ENCODE measurements at regions of chr17 and their contacts with region 1.

Region 1: GRCh38 chr17:17356149-17356930 is 53.2 kb downstream of the NT5M start:
- DNase-seq: peak; percentile 85
- ATAC-seq: peak; percentile 98
- H3K4me3 ChIP-seq: no peak overlapping the region
- H3K27ac ChIP-seq: no peak overlapping the region
- H3K4me1 ChIP-seq: peaks cover 2% of the 10 kb centered on the region; the same call in 1 of the 2 replicates
- H3K27me3 ChIP-seq: no peaks in the 10 kb centered on the region; the same call in 1 of the 2 replicates
- CTCF ChIP-seq: peak; percentile 99
- POLR2A ChIP-seq: peak; percentile 70; the same call in 1 of the 2 replicates
- RAD21 ChIP-seq: peak; percentile 100

Region 2: DNA sequence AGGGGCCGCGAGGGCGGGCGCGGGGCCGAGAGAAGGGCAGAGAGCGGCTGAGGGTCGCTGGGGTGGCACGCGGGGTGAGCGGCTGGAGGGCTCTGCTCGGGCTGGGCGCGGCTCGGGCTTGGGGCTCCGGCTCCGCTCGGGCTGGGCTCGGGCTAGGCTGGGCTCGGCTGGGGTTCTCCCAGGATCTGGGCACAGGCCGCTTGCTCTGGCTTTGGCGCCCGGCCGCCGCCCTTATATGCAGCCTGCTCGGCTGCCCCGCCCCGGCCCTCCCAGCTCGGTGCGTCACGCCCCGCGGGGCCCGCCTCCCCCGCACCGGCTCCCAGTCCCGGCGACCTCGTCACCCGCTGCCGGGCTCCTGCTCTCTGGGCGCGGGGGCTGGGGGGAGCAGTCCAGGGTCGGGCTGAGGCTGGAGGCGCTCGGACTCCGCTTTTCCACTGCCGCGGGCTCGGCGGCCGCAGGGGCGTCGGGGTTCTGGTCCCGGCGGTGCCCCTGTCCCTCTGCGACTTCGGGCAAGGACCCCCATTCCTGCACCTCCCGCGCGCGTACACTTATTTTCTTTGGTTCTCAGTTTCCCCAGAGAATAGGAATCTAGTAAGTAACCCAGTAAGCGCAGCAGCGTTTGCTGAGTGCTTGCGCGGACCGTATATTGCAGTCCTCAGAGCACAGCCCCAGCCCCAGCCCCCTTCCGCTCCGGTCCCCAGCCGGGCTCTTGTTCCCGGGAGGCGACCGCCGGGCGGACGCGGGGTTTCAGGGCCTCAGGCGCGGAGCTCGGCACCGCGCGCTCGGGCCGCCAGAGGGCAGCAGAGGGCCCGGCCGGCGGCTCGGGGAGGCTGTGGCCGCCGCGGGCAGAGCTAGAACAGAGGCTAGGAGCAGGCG is 140.1 kb after region 1 on chr17 and contains the start of gene RASD1:
- CTCF ChIA-PET with region 1: interaction called, 5 read pairs
- POLR2A ChIA-PET with region 1: interaction called, 3 read pairs
- dilution Hi-C with region 1: no loop called
- in situ Hi-C with region 1: loop called (anchors 5 kb)
- intact Hi-C with region 1: loop called (anchors 1 kb)
- DNase-seq: peak; percentile 81
- ATAC-seq: peak; percentile 93
- H3K4me3 ChIP-seq: peak within 1 kb of the TSS; percentile 63
- H3K27ac ChIP-seq: peak within 1 kb of the TSS; percentile 6; the same call in 1 of the 2 replicates
- H3K4me1 ChIP-seq: peaks cover 7% of the 10 kb centered on the region; the same call in 1 of the 2 replicates
- H3K27me3 ChIP-seq: peaks cover 3% of the 10 kb centered on the region; the same call in 1 of the 2 replicates
- CTCF ChIP-seq: peak; percentile 94
- POLR2A ChIP-seq: peak; percentile 98
- RAD21 ChIP-seq: peak; percentile 82
- total RNA-seq, gene RASD1: 0.54 and 1.1 TPM in 2 replicates

Region 3: GRCh38 chr17:17613708-17614114 is 257.4 kb after region 1 on chr17:
- CTCF ChIA-PET with region 1: interaction called, 4 read pairs
- POLR2A ChIA-PET with region 1: no interaction called
- dilution Hi-C with region 1: no loop called
- in situ Hi-C with region 1: no loop called
- intact Hi-C with region 1: loop called (anchors 1 kb)
- DNase-seq: peak; percentile 73
- ATAC-seq: peak; percentile 100
- H3K4me3 ChIP-seq: no peak overlapping the region
- H3K27ac ChIP-seq: no peak overlapping the region
- H3K4me1 ChIP-seq: no peaks in the 10 kb centered on the region; the same call in 1 of the 2 replicates
- H3K27me3 ChIP-seq: peaks cover 4% of the 10 kb centered on the region; the same call in 1 of the 2 replicates
- CTCF ChIP-seq: peak; percentile 72
- POLR2A ChIP-seq: no peak
- RAD21 ChIP-seq: peak; percentile 73

Region 4: GRCh38 chr17:17749921-17750320 is 393.6 kb after region 1 on chr17:
- CTCF ChIA-PET with region 1: no interaction called
- POLR2A ChIA-PET with region 1: no interaction called
- dilution Hi-C with region 1: no loop called
- in situ Hi-C with region 1: no loop called
- intact Hi-C with region 1: loop called (anchors 10 kb)
- DNase-seq: peak; percentile 43
- ATAC-seq: no peak
- H3K4me3 ChIP-seq: no peak overlapping the region
- H3K27ac ChIP-seq: no peak overlapping the region
- H3K4me1 ChIP-seq: peaks cover 20% of the 10 kb centered on the region
- H3K27me3 ChIP-seq: no peaks in the 10 kb centered on the region
- CTCF ChIP-seq: no peak
- POLR2A ChIP-seq: no peak
- RAD21 ChIP-seq: no peak

Region 5: GRCh38 chr17:18038861-18039534 is 682.7 kb after region 1 on chr17 and contains the starts of genes ATPAF2 and GID4:
- CTCF ChIA-PET with region 1: no interaction called
- POLR2A ChIA-PET with region 1: no interaction called
- dilution Hi-C with region 1: no loop called
- in situ Hi-C with region 1: no loop called
- intact Hi-C with region 1: loop called (anchors 10 kb)
- DNase-seq: peak; percentile 98
- ATAC-seq: peak; percentile 96
- H3K4me3 ChIP-seq: peak within 1 kb of the TSS; percentile 66
- H3K27ac ChIP-seq: peak within 1 kb of the TSS; percentile 78
- H3K4me1 ChIP-seq: peaks cover 14% of the 10 kb centered on the region
- H3K27me3 ChIP-seq: no peaks in the 10 kb centered on the region
- CTCF ChIP-seq: no peak
- POLR2A ChIP-seq: peak; percentile 49; the same call in 1 of the 2 replicates
- RAD21 ChIP-seq: no peak
- total RNA-seq, gene ATPAF2: 14.2 and 27.6 TPM in 2 replicates
- total RNA-seq, gene GID4: 3.9 and 5.0 TPM in 2 replicates

Measured in IMR-90 (cell line).